Activated B cell treated with CpG ODN at 0.5 μM for 24 hours (primary cell): ENCODE measurements at regions of chr3 and their contacts with region 1.

Region 1: DNA sequence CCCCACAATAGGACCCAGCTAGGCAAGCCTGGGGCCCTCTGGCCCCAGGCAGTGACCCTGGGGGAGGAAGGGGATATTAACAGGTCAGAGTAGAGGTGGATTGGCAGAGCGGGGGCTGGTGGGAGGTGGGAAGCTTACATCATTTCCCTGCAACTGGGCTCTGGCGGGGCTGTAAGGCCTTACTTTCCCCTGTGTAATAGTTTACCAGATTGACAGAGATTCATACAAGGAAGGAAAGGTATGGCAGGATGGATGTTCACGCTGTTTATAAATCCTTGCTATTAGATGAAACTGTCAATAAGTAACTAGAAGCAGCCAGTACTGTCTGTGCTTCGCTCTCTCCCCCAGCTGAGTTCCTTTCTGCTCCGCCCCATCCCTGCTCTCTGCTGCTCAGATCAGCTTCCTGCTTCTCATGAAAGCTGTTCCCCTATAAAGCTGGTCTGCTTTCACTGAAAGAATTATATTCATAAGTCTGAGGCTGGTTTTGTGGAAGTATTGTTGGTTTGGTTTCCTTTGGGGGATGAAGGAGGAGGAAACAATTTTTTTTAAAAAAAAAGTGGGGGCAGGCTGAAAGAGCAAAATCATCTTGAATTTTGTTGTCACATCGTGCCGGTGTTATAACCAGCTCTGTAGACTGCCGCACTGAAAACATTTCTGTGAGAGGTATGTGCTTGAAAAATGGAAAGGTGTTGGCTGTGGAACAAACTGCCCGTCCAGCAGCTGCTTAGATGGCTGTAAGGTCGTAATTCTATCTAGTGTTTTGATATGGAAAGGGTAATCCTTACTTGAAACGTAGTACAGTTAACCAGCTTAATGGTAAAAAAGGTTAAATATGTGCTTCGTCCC is 76.4 kb downstream of the BBX start:
- DNase-seq: peak; percentile 18
- ATAC-seq: peak; percentile 92
- H3K4me3 Mint-ChIP-seq: peak overlapping the region; percentile 82
- H3K27ac Mint-ChIP-seq: peak overlapping the region; percentile 93
- H3K4me1 Mint-ChIP-seq: peaks cover 64% of the 10 kb centered on the region
- H3K27me3 Mint-ChIP-seq: no peaks in the 10 kb centered on the region
- CTCF ChIP-seq: no peak

Region 2: GRCh38 chr3:107633327-107634098 is 34.4 kb after region 1 on chr3:
- CTCF ChIA-PET with region 1: no interaction called
- POLR2A ChIA-PET with region 1: no interaction called
- intact Hi-C with region 1: loop called (anchors 5 kb)
- DNase-seq: no peak
- ATAC-seq: peak; percentile 52
- H3K4me3 Mint-ChIP-seq: no peak overlapping the region
- H3K27ac Mint-ChIP-seq: peak overlapping the region; percentile 68
- H3K4me1 Mint-ChIP-seq: peaks cover 44% of the 10 kb centered on the region
- H3K27me3 Mint-ChIP-seq: no peaks in the 10 kb centered on the region
- CTCF ChIP-seq: no peak